Natural killer cell (primary cell): ENCODE measurements at regions of chr20 and their contacts with region 1.

Region 1: GRCh38 chr20:62793912-62794724 is 2.2 kb upstream of the MRGBP start:
- DNase-seq: peak; percentile 92 to 97
- ATAC-seq: peak; percentile 81 to 91 (median 85)
- H3K4me3 ChIP-seq: peak overlapping the region; percentile 81
- H3K4me3 Mint-ChIP-seq: peak overlapping the region; percentile 92
- H3K27ac ChIP-seq: peak overlapping the region; percentile 100
- H3K27ac Mint-ChIP-seq: peak overlapping the region; percentile 93 to 95
- H3K4me1 ChIP-seq: peaks cover 39% of the 10 kb centered on the region
- H3K4me1 Mint-ChIP-seq: peaks cover 27 to 65% of the 10 kb centered on the region in 2 donors
- H3K27me3 ChIP-seq: no peaks in the 10 kb centered on the region
- H3K27me3 Mint-ChIP-seq: no peaks in the 10 kb centered on the region
- CTCF ChIP-seq: no peak

Region 2: DNA sequence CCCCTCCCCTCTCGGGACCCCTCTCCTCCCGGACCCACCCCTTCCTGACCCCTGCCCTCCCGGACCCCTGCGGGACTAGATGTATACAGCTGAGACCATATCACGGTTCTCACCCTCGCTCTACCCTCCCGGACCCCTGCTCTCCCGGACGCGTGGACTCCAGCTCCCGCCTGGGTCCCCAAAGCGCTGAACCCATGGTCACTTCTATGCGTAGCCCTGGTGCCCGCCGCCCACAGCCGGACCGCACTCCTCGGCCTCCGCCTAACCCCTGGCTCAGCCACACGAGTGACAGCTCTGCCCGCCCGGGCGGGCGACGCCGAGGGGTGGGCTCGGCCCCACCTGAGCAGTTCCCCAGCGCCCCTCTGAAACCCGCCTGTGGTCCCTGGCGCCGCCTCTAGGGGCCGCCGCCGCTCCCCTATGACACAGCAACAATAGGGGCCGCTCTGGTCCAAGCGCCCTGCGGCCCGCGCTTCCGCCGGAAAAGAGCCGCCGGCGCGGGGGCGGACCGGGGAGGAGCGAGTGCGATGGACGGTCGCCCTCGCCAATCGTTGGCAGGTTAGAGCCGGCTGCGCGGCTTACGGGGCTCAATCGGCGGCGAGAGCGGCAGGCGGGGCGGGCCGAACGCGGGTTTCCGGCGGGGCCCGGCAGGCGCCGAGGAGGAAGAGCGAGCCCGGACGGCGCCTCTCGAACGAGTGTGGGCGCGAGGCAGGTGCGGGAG is 491.6 kb before region 1 on chr20 and contains the start of gene ADRM1:
- intact Hi-C with region 1: loop called (anchors 5 kb)
- DNase-seq: peak; percentile 97 to 98
- ATAC-seq: peak; percentile 82 to 94 (median 88)
- H3K4me3 ChIP-seq: peak within 1 kb of the TSS; percentile 63
- H3K4me3 Mint-ChIP-seq: peak within 1 kb of the TSS; percentile 99
- H3K27ac ChIP-seq: peak within 1 kb of the TSS; percentile 94
- H3K27ac Mint-ChIP-seq: peak within 1 kb of the TSS; percentile 98 to 99
- H3K4me1 ChIP-seq: peaks cover 34% of the 10 kb centered on the region
- H3K4me1 Mint-ChIP-seq: peaks cover 28 to 43% of the 10 kb centered on the region in 2 donors
- H3K27me3 ChIP-seq: no peaks in the 10 kb centered on the region
- H3K27me3 Mint-ChIP-seq: no peaks in the 10 kb centered on the region
- CTCF ChIP-seq: peak; percentile 70
- total RNA-seq, gene ADRM1: 81.4 to 88.4 (median 84.6) TPM

Region 3: DNA sequence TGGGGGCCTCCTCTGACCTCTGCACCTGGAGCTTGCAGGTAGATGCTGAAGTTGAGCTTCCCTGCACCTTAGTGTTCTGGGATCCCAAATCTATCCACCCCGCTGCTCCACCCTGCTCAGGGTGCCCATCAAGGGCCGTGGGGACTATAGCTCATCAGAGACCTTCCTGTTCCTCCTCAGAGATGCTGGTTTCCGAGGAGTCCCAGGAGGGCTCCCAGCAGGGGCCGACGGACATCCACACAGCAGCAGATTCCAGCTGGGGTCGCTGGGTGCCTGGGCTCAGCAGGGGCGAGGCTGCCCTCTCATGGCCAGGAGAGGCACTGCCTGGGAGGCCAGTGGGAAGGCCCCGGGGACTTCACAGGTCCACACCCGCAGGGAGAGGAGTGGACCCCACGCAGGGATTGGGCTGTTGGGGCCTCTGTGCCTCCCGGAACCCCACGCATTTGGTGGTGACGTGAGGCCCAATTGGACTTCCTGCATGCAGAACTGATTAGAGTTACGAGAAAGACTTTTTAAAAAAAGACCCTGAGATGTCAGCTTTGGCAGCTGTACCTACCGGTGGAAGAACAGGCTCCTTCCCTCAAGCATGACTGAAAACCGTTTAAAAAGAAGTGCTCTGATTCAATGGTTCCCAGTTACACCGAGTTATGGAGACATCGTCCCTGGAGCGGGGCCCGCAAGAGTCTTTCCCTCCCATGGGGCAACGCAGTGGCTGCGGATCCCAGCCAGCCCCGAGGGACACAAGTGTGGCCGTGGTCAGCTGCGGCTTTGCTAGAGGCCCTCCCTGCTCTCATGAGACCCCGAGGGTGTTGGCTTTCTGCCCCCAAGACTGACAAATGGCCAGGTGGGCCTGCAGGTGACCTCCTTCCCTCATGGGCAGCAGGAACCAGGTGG is 177.1 kb before region 1 on chr20:
- intact Hi-C with region 1: loop called (anchors 5 kb)
- DNase-seq: peak; percentile 70 to 82
- ATAC-seq: peak; percentile 58 to 83 (median 80)
- H3K4me3 ChIP-seq: no peak overlapping the region
- H3K4me3 Mint-ChIP-seq: peak overlapping the region; percentile 83
- H3K27ac ChIP-seq: peak overlapping the region; percentile 53
- H3K27ac Mint-ChIP-seq: peak overlapping the region; percentile 89 to 95
- H3K4me1 ChIP-seq: peaks cover 30% of the 10 kb centered on the region
- H3K4me1 Mint-ChIP-seq: peaks cover 21 to 32% of the 10 kb centered on the region in 2 donors
- H3K27me3 ChIP-seq: no peaks in the 10 kb centered on the region
- H3K27me3 Mint-ChIP-seq: no peaks in the 10 kb centered on the region
- CTCF ChIP-seq: peak; percentile 98

Region 4: GRCh38 chr20:62740286-62741141 is 53.6 kb before region 1 on chr20:
- intact Hi-C with region 1: loop called (anchors 1 kb)
- DNase-seq: peak; percentile 76 to 91
- ATAC-seq: peak; percentile 76 to 88 (median 80)
- H3K4me3 ChIP-seq: peak overlapping the region; percentile 22
- H3K4me3 Mint-ChIP-seq: peak overlapping the region; percentile 92
- H3K27ac ChIP-seq: peak overlapping the region; percentile 57
- H3K27ac Mint-ChIP-seq: peak overlapping the region; percentile 95
- H3K4me1 ChIP-seq: peaks cover 53% of the 10 kb centered on the region
- H3K4me1 Mint-ChIP-seq: peaks cover 12 to 30% of the 10 kb centered on the region in 2 donors
- H3K27me3 ChIP-seq: no peaks in the 10 kb centered on the region
- H3K27me3 Mint-ChIP-seq: peaks cover 0 to 3% of the 10 kb centered on the region in 2 donors
- CTCF ChIP-seq: no peak

Region 5: GRCh38 chr20:62861726-62862336 is 67.7 kb after region 1 on chr20 and contains the start of gene TCFL5:
- intact Hi-C with region 1: loop called (anchors 2 kb)
- DNase-seq: peak; percentile 94 to 97
- ATAC-seq: peak; percentile 89 to 99 (median 91)
- H3K4me3 ChIP-seq: peak within 1 kb of the TSS; percentile 23
- H3K4me3 Mint-ChIP-seq: peak within 1 kb of the TSS; percentile 78
- H3K27ac ChIP-seq: peak within 1 kb of the TSS; percentile 45
- H3K27ac Mint-ChIP-seq: peak within 1 kb of the TSS; percentile 50 to 51
- H3K4me1 ChIP-seq: peaks cover 10% of the 10 kb centered on the region
- H3K4me1 Mint-ChIP-seq: peaks cover 13 to 28% of the 10 kb centered on the region in 2 donors
- H3K27me3 ChIP-seq: no peaks in the 10 kb centered on the region
- H3K27me3 Mint-ChIP-seq: no peaks in the 10 kb centered on the region
- CTCF ChIP-seq: no peak
- total RNA-seq, gene TCFL5: 5.1 to 8.0 (median 6.4) TPM